Caco-2 (cell line): ENCODE measurements at regions of chr13 and their contacts with region 1.

Region 1: GRCh38 chr13:73765651-73766384 is 368.4 kb downstream of the KLF12 start:
- DNase-seq: peak; percentile 42 to 46
- H3K4me3 ChIP-seq: no peak overlapping the region
- H3K4me3 Mint-ChIP-seq: peak overlapping the region; percentile 35
- H3K27ac Mint-ChIP-seq: peak overlapping the region; percentile 45
- H3K4me1 ChIP-seq: peaks cover 14% of the 10 kb centered on the region; the same call in 1 of the 2 replicates
- H3K4me1 Mint-ChIP-seq: peaks cover 18% of the 10 kb centered on the region
- H3K27me3 ChIP-seq: no peaks in the 10 kb centered on the region
- H3K27me3 Mint-ChIP-seq: no peaks in the 10 kb centered on the region
- CTCF ChIP-seq: no peak

Region 2: DNA sequence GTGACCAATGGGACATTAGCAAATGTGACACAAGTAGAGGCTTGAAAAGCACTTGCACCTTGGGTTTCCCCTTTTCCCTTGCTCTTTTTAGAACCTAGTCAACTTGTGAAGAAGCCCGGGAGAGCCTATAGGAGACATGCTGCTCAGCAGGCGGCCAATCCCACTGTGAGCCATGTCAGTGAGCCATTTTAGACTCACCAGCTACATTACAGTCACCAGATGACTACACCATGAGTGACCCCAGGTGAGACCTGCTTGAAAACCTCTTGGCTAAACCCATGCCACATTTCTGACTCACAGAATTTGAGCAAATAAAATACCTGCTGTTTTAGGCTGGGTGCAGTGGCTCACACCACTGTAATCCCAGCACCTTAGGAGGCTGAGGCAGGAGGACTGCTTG is 50.9 kb after region 1 on chr13:
- CTCF ChIA-PET with region 1: no interaction called
- POLR2A ChIA-PET with region 1: no interaction called
- intact Hi-C with region 1: loop called (anchors 5 kb)
- DNase-seq: no peak
- H3K4me3 ChIP-seq: no peak overlapping the region
- H3K4me3 Mint-ChIP-seq: no peak overlapping the region
- H3K27ac Mint-ChIP-seq: no peak overlapping the region
- H3K4me1 ChIP-seq: peaks cover 25% of the 10 kb centered on the region
- H3K4me1 Mint-ChIP-seq: peaks cover 35% of the 10 kb centered on the region
- H3K27me3 ChIP-seq: no peaks in the 10 kb centered on the region
- H3K27me3 Mint-ChIP-seq: no peaks in the 10 kb centered on the region
- CTCF ChIP-seq: no peak